Endothelial cell of umbilical vein (primary cell): ENCODE measurements at regions of chr12 and their contacts with region 1.

Region 1: GRCh38 chr12:21677622-21678277 is 20.1 kb upstream of the LDHB start:
- DNase-seq: no peak
- H3K4me3 ChIP-seq: no peak overlapping the region
- H3K27ac ChIP-seq: no peak overlapping the region
- H3K4me1 ChIP-seq: peaks cover 4% of the 10 kb centered on the region
- H3K27me3 ChIP-seq: peaks cover 9 to 11% of the 10 kb centered on the region in 2 experiments
- CTCF ChIP-seq: no peak
- POLR2A ChIP-seq: no peak

Region 2: DNA sequence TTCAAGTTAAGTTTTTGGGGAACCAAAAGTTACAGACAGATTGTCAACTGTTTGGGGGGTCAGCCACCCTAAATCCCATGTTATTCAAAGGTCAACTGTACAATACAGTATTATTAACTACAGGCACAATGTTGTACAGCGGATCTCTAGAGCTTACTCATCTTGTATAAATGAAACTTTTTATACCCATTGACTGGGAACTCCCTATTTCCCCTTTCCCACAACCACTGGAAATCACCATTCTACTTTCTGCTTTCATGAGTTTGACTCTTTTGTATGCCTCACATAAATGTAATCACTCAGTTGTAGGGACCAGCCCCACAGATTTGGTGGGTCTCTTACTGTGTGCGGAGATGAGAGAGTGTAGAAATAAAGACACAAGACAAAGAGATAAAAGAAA is 809.5 kb before region 1 on chr12:
- CTCF ChIA-PET with region 1: no interaction called
- POLR2A ChIA-PET with region 1: no interaction called
- dilution Hi-C with region 1: no loop called
- intact Hi-C with region 1: no loop called
- DNase-seq: no peak
- H3K4me3 ChIP-seq: no peak overlapping the region
- H3K27ac ChIP-seq: no peak overlapping the region
- H3K4me1 ChIP-seq: no peaks in the 10 kb centered on the region
- H3K27me3 ChIP-seq: no peaks in the 10 kb centered on the region
- CTCF ChIP-seq: no peak
- POLR2A ChIP-seq: no peak

Region 3: DNA sequence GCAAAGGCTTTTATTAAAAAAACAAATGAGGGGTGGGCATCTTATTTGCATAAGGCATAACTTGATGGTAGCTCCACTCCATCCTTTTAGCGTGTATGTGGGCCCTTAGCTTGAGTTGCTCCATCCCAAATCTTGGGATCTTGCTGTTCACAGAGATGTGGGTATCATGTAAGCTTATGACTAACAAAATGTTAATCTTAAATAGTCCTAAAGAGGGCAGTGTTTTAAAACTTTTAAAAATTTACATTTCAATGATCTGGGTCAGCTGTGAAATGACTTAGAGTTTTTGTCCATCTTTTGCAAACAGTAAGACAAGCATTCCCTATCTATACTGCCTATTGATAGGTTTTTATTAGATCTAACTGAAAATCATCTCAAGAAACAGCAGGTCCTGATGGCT is 429.1 kb before region 1 on chr12:
- CTCF ChIA-PET with region 1: interaction called, 64 read pairs
- POLR2A ChIA-PET with region 1: no interaction called
- dilution Hi-C with region 1: no loop called
- intact Hi-C with region 1: loop called (anchors 1 kb)
- DNase-seq: peak; percentile 22
- H3K4me3 ChIP-seq: no peak overlapping the region
- H3K27ac ChIP-seq: no peak overlapping the region
- H3K4me1 ChIP-seq: no peaks in the 10 kb centered on the region
- H3K27me3 ChIP-seq: no peaks in the 10 kb centered on the region
- CTCF ChIP-seq: no peak
- POLR2A ChIP-seq: no peak

Region 4: DNA sequence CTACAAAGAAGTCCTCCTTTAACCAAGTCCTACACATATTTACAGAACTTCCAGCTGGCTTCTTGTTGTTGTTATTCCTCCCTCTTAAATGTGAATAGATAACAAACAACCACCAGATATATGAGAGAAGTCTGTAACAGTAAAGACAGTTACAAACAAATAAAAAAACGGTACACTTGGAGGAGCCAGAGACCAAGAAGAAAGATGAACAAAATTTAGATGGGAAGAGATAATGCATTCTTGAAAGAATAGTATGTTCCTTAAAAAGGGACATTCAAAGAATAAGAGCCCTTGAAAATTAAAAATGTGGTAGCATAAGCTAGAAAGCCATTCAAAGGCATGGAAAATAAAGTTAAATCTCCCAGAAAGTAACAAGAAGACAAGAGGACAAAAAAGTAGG is 369.0 kb before region 1 on chr12:
- CTCF ChIA-PET with region 1: interaction called, 18 read pairs
- POLR2A ChIA-PET with region 1: no interaction called
- dilution Hi-C with region 1: no loop called
- intact Hi-C with region 1: loop called (anchors 2 kb)
- DNase-seq: peak; percentile 4
- H3K4me3 ChIP-seq: no peak overlapping the region
- H3K27ac ChIP-seq: no peak overlapping the region
- H3K4me1 ChIP-seq: no peaks in the 10 kb centered on the region
- H3K27me3 ChIP-seq: peaks cover 1 to 3% of the 10 kb centered on the region in 2 experiments
- CTCF ChIP-seq: no peak
- POLR2A ChIP-seq: no peak

Region 5: GRCh38 chr12:21527451-21528180 is 150.1 kb before region 1 on chr12:
- CTCF ChIA-PET with region 1: interaction called, 14 read pairs
- POLR2A ChIA-PET with region 1: no interaction called
- dilution Hi-C with region 1: no loop called
- intact Hi-C with region 1: no loop called
- DNase-seq: peak; percentile 36
- H3K4me3 ChIP-seq: peak overlapping the region; percentile 50 to 75 (median 74)
- H3K27ac ChIP-seq: no peak overlapping the region
- H3K4me1 ChIP-seq: peaks cover 12% of the 10 kb centered on the region
- H3K27me3 ChIP-seq: peaks cover 12 to 39% of the 10 kb centered on the region in 2 experiments
- CTCF ChIP-seq: no peak
- POLR2A ChIP-seq: no peak

Region 6: GRCh38 chr12:21651821-21652220 is 25.9 kb before region 1 on chr12:
- CTCF ChIA-PET with region 1: interaction called, 21 read pairs
- POLR2A ChIA-PET with region 1: no interaction called
- dilution Hi-C with region 1: no loop called
- intact Hi-C with region 1: loop called (anchors 2 kb)
- DNase-seq: no peak
- H3K4me3 ChIP-seq: no peak overlapping the region
- H3K27ac ChIP-seq: no peak overlapping the region
- H3K4me1 ChIP-seq: peaks cover 14% of the 10 kb centered on the region
- H3K27me3 ChIP-seq: no peaks in the 10 kb centered on the region
- CTCF ChIP-seq: no peak
- POLR2A ChIP-seq: no peak

Region 7: DNA sequence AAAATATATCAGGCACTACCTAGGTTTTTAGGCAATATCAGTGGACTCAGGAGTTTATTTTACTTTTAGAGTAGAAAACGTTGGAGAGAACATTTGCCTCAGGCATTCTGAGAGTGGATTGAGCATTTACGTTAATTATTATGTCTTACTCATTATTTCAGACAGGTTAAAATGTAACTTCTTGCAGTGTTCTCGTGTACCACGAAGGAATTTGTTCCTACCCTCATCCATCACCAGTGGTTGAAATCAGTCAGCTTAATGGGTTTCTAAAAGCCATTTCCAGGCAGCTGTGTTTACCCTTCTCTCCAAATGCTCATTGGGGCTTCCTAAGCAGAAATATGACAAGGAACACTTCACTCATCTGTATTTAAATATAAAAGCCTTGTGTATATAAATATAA is 11.0 kb before region 1 on chr12:
- CTCF ChIA-PET with region 1: interaction called, 17 read pairs
- POLR2A ChIA-PET with region 1: no interaction called
- dilution Hi-C with region 1: no loop called
- intact Hi-C with region 1: no loop called
- DNase-seq: no peak
- H3K4me3 ChIP-seq: no peak overlapping the region
- H3K27ac ChIP-seq: no peak overlapping the region
- H3K4me1 ChIP-seq: no peaks in the 10 kb centered on the region
- H3K27me3 ChIP-seq: peaks cover 18 to 37% of the 10 kb centered on the region in 2 experiments
- CTCF ChIP-seq: no peak
- POLR2A ChIP-seq: no peak